ENCODE measurements at regions of chr3 and their contacts with region 1.

Region 1: DNA sequence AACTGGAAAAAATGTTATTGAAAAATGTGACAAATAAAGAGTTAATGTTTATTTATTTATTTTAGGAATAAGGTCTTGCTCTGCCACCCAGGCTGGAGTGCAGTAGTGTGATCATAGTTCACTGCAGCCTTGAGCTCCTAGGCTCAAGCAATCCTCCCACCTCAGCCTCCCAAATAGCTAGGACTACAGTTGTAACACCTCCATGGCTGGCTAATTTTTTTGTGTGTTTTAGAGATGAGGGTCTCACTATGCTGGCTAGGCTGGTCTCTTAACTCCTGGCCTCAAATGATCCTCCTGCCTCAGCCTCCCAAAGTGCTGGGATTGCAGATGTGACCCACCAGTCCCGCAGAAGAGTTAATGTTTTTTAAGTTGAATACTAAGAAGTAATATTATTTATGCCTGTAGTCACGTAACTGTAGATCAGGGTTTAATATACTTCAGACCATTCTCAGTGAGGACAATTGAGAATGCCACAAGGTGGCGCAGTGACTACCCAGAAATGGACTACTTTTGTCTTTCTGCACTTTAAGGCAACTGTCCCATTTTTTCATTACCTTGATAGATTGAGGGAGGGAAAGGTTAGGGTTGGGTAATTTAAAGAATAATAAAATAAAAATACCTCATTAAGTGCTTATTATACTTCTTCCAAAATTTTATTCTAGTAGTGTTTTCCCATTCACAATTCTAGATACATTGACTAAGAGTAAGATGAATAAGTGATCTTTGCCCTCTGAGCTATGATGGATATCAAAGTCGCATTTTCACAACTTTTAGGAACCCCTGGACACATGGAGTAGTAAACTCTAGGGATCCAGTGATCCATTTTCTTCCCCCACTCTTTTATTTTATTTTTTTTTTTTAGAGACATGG is 6.0 kb downstream of the MUC13 start:
- DNase-seq: peak; percentile 74
- H3K4me3 ChIP-seq: no peak overlapping the region
- H3K27ac ChIP-seq: peak overlapping the region in 2 of 4 donors; percentile 3 to 32
- H3K4me1 ChIP-seq: peaks cover 0 to 52% (median 12%) of the 10 kb centered on the region in 4 donors
- H3K27me3 ChIP-seq: no peaks in the 10 kb centered on the region
- CTCF ChIP-seq: peak; percentile 68 to 87 (median 72)
- EP300 ChIP-seq: no peak
- POLR2A ChIP-seq: no peak

Region 2: GRCh38 chr3:124559881-124560574 is 368.5 kb before region 1 on chr3:
- in situ Hi-C with region 1: loop called in 2 of 4 experiments (anchors 25 kb)
- intact Hi-C with region 1: no loop called
- DNase-seq: peak; percentile 75
- H3K4me3 ChIP-seq: no peak overlapping the region
- H3K27ac ChIP-seq: peak overlapping the region; percentile 39 to 49 (median 42)
- H3K4me1 ChIP-seq: peaks cover 4 to 32% (median 18%) of the 10 kb centered on the region in 4 donors
- H3K27me3 ChIP-seq: no peaks in the 10 kb centered on the region
- CTCF ChIP-seq: peak; percentile 76 to 91 (median 81)
- EP300 ChIP-seq: no peak
- POLR2A ChIP-seq: no peak

Region 3: GRCh38 chr3:124584552-124585391 is 343.8 kb before region 1 on chr3:
- in situ Hi-C with region 1: loop called in 1 of 4 experiments (anchors 25 kb)
- intact Hi-C with region 1: no loop called
- DNase-seq: peak; percentile 86
- H3K4me3 ChIP-seq: peak overlapping the region; percentile 30 to 66 (median 48)
- H3K27ac ChIP-seq: peak overlapping the region in 3 of 4 donors; percentile 52 to 65 (median 60)
- H3K4me1 ChIP-seq: peaks cover 0 to 17% (median 15%) of the 10 kb centered on the region in 4 donors
- H3K27me3 ChIP-seq: peaks cover 28% of the 10 kb centered on the region
- CTCF ChIP-seq: no peak
- EP300 ChIP-seq: no peak
- POLR2A ChIP-seq: peak; percentile 81

Region 4: GRCh38 chr3:124663690-124664089 is 264.9 kb before region 1 on chr3:
- in situ Hi-C with region 1: no loop called
- intact Hi-C with region 1: no loop called
- DNase-seq: no peak
- H3K4me3 ChIP-seq: no peak overlapping the region
- H3K27ac ChIP-seq: no peak overlapping the region
- H3K4me1 ChIP-seq: no peaks in the 10 kb centered on the region
- H3K27me3 ChIP-seq: no peaks in the 10 kb centered on the region
- CTCF ChIP-seq: no peak
- EP300 ChIP-seq: no peak
- POLR2A ChIP-seq: no peak

Region 5: DNA sequence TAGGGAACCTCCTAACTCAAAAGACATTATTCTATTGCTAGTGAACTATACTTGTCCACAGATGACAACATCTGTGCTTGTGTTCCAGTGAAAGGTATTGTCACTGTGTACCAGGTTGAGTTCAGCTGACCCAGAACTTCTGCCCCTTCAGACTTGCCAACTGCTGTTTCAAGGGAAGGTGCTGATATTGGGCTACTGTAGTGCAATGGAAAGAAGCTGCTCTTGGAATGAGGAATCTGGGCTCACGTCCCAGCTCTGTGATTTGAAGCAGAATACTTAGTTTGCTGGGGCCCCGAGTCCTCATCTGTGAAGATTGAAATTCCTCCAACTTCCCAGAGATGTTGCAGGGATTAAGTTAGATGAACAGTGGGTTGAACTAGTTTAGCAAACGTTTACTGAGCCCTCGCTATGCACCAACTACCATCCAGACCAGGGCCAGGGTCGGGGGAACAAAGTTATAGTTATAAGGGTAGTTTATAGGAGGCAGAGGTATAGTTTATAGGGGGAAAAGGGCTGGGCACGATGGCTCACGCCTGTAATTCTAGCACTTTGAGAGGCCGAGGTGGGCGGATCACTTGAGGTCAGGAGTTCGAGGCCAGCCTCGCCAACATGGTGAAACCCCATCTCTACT is 214.2 kb before region 1 on chr3:
- in situ Hi-C with region 1: no loop called
- intact Hi-C with region 1: no loop called
- DNase-seq: no peak
- H3K4me3 ChIP-seq: no peak overlapping the region
- H3K27ac ChIP-seq: peak overlapping the region in 2 of 4 donors; percentile 8 to 9
- H3K4me1 ChIP-seq: no peaks in the 10 kb centered on the region
- H3K27me3 ChIP-seq: no peaks in the 10 kb centered on the region
- CTCF ChIP-seq: no peak
- EP300 ChIP-seq: no peak
- POLR2A ChIP-seq: no peak

Region 6: GRCh38 chr3:124986158-124987143 is 57.9 kb after region 1 on chr3:
- in situ Hi-C with region 1: loop called in 1 of 4 experiments (anchors 10 kb)
- intact Hi-C with region 1: no loop called
- DNase-seq: peak; percentile 60
- H3K4me3 ChIP-seq: no peak overlapping the region
- H3K27ac ChIP-seq: peak overlapping the region; percentile 67 to 78 (median 77)
- H3K4me1 ChIP-seq: peaks cover 18 to 33% (median 30%) of the 10 kb centered on the region in 4 donors
- H3K27me3 ChIP-seq: no peaks in the 10 kb centered on the region
- CTCF ChIP-seq: peak; percentile 44 to 82 (median 56)
- EP300 ChIP-seq: no peak
- POLR2A ChIP-seq: no peak

Region 7: GRCh38 chr3:125051715-125052581 is 123.4 kb after region 1 on chr3:
- in situ Hi-C with region 1: no loop called
- intact Hi-C with region 1: no loop called
- DNase-seq: peak; percentile 30
- H3K4me3 ChIP-seq: peak overlapping the region in 3 of 4 donors; percentile 5 to 32 (median 7)
- H3K27ac ChIP-seq: peak overlapping the region; percentile 87 to 90 (median 89)
- H3K4me1 ChIP-seq: peaks cover 31 to 63% (median 36%) of the 10 kb centered on the region in 4 donors
- H3K27me3 ChIP-seq: peaks cover 5% of the 10 kb centered on the region
- CTCF ChIP-seq: no peak
- EP300 ChIP-seq: no peak
- POLR2A ChIP-seq: no peak

Region 8: DNA sequence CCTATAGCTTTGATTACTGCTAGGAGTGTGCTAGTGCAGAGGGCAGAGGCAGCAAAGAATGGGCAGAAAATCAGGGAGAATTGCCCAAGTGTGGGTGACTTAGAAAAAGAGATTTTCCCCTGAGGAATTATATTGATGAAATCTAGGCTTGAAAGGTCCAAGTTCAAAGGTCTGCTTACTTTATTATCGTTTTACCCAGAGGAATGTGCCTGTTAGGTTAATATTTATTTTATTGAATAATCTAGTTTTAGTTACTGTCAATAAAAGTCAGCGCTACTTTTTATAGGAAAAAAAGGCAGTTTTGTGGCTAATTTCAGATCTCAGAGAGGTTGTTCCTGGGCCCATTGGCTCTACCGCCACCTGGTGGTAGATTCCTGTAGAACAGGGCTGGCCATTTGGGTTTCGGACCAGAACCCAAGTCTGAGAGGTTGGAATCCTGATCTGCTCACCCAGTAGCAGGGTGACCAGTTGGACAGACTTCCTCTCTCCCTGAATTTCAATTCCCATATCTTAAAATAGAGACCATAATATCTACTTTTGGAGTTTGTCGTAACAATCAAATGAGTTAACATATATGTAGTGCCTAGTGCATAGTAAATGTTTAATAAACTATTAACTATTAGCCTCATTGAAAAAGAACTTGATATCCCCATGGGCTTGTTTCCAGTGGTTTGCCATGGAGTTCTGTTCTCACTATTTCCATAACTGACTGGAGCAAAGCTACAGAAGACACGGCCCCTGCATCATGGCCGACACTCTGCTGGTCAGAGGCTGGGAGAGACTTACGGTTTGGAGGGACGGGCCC is 509.3 kb after region 1 on chr3:
- in situ Hi-C with region 1: loop called in 2 of 4 experiments (anchors 10 to 25 kb)
- intact Hi-C with region 1: loop called (anchors 10 kb)
- DNase-seq: peak; percentile 56
- H3K4me3 ChIP-seq: no peak overlapping the region
- H3K27ac ChIP-seq: no peak overlapping the region
- H3K4me1 ChIP-seq: peaks cover 0 to 9% (median 0%) of the 10 kb centered on the region in 4 donors
- H3K27me3 ChIP-seq: no peaks in the 10 kb centered on the region
- CTCF ChIP-seq: peak; percentile 87 to 97 (median 96)
- EP300 ChIP-seq: no peak
- POLR2A ChIP-seq: no peak